Calu3 (cell line): ENCODE measurements at regions of chr2 and their contacts with region 1.

Region 1: GRCh38 chr2:70523996-70524965 is 29.3 kb downstream of the TGFA start:
- DNase-seq: peak; percentile 91
- H3K4me3 Mint-ChIP-seq: peak overlapping the region; percentile 54
- H3K27ac Mint-ChIP-seq: peak overlapping the region; percentile 96
- H3K4me1 Mint-ChIP-seq: peaks cover 73% of the 10 kb centered on the region
- H3K27me3 Mint-ChIP-seq: no peaks in the 10 kb centered on the region
- CTCF ChIP-seq: no peak

Region 2: DNA sequence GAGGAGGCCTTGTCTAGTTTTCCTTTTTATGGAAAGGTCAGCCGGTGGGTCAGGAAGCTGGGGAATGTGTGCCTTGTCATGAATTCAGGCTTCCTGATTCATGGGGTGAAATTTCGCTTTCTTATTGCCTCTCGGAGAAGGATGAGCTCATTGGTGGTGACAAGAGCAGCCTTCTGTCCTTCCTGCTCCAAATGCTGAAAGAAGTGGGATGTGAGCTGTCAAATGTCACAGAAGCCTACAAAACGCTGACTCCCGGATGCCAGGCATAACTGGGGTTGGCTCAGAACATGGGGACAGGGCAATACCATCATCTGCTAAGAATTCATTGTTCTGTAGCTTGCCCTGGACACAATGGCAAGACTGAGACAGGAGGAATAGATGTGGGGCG is 166.6 kb before region 1 on chr2:
- CTCF ChIA-PET with region 1: no interaction called
- intact Hi-C with region 1: no loop called
- DNase-seq: no peak
- H3K4me3 Mint-ChIP-seq: no peak overlapping the region
- H3K27ac Mint-ChIP-seq: no peak overlapping the region
- H3K4me1 Mint-ChIP-seq: peaks cover 37% of the 10 kb centered on the region
- H3K27me3 Mint-ChIP-seq: no peaks in the 10 kb centered on the region
- CTCF ChIP-seq: no peak

Region 3: DNA sequence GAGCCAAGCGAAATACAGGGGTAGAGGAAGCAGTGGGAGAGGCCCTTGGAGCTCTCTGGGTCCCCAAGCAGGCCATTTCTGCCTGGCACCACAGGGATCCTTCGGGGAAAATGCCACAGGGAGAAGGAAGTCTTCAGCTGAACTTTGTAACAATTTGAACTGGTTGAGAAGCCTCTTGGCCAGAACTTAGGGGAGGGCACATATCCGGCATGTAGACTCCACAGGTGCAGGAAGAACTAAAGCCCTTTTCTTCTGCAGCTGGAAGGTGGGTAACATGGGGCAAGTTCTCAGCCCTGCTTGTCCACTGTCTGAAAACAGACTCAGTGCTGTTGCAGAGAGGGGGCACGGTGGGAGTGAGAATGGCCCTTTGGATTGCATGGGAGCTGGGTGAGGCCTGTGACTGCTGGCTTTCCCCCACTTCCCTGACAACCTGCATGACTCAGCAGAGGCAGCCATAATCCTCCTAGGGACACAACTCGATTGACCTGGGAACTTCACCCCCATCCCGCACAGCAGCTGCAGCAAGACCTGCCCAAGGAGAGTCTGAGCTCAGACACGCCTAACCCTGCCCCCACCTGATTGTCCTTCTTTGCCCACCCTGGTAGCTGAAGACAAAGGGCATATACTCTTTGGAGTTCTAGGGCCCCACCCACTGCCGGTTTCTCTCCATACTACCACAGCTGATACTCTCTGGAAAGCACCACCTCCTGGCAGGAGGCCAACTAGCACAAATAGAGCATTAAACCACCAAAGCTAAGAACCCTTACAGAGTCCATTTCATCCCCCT is 120.8 kb before region 1 on chr2:
- CTCF ChIA-PET with region 1: no interaction called
- intact Hi-C with region 1: no loop called
- DNase-seq: peak; percentile 10
- H3K4me3 Mint-ChIP-seq: no peak overlapping the region
- H3K27ac Mint-ChIP-seq: no peak overlapping the region
- H3K4me1 Mint-ChIP-seq: peaks cover 20% of the 10 kb centered on the region
- H3K27me3 Mint-ChIP-seq: peaks cover 7% of the 10 kb centered on the region
- CTCF ChIP-seq: no peak

Region 4: DNA sequence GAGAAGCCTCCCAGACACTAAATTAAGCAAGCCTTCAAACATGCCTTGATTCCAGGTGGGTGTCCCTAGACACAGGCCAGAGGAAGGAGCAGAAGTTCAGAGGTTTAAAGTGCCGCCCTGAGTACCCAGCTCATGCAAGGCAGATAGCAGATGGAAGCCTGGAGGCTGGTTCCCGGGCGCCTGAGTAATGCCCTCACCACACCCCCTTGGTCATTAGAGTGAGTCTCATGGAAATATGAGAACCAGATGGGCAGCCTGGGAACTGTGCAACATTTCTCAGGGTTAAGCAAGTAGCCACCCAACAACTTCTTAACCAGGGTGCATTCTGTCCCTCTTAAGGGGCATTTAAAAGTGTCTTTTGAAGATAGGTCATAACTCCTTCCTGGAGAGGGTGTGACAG is 14.7 kb before region 1 on chr2:
- CTCF ChIA-PET with region 1: interaction called, 14 read pairs
- intact Hi-C with region 1: no loop called
- DNase-seq: peak; percentile 82
- H3K4me3 Mint-ChIP-seq: peak overlapping the region; percentile 57
- H3K27ac Mint-ChIP-seq: peak overlapping the region; percentile 97
- H3K4me1 Mint-ChIP-seq: peaks cover 72% of the 10 kb centered on the region
- H3K27me3 Mint-ChIP-seq: no peaks in the 10 kb centered on the region
- CTCF ChIP-seq: no peak